ENCODE measurements at regions of chr15 and their contacts with region 1.

Region 1: DNA sequence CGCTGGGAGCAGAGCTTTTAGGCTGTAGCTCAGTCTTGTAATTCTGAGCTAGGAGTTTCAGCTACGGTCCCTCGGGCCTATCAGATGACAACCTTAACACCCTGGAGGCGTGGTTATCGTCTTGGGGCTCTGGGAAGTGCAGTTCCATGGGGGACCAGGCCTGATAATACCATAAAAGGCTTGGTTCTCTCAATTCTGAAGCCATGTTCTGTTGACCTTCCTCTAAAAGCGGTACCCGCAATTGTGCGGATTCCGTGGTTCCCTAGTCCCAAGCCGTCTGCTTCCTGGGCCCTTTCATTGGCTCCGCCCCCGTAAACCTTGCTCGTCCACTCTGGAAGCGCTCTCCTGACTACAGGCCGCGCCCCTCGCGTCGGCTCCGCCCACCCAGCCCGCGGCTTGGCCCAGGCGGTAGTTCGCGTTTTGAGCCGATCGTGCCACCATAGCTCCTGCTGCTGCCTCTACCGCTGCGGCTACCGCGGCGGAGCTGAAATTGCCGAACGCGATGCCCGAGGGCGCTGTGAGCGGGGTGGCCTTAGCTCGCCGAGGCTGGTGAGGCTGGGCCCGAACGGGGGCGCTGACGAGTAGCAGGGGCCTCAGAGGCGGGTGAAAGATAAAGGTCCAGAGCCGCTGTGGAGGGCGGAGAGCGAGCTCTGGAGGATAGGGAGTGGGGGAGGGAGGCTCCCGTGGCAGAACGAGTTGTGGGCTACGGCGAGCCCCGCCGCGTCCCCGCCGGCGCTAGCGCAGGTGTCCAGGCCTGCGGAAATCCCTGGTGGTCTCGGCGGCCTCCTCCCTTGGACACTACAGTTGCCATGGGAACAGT is at the start of gene MAPKBP1:
- DNase-seq: peak; percentile 99
- ATAC-seq: peak; percentile 93
- H3K4me3 Mint-ChIP-seq: peak within 1 kb of the TSS; percentile 86
- H3K27ac Mint-ChIP-seq: peak within 1 kb of the TSS; percentile 100
- H3K4me1 Mint-ChIP-seq: peaks cover 38% of the 10 kb centered on the region
- H3K27me3 Mint-ChIP-seq: no peaks in the 10 kb centered on the region
- CTCF ChIP-seq: 0 out of 2 replicates have a peak, but pooled peaks have one; percentile 37
- total RNA-seq, gene MAPKBP1: 11.0 to 14.5 TPM (median 12.9 TPM) in 3 replicates

Region 2: GRCh38 chr15:41585127-41586047 is 188.9 kb before region 1 on chr15:
- CTCF ChIA-PET with region 1: interaction called, 17 read pairs
- POLR2A ChIA-PET with region 1: no interaction called
- DNase-seq: peak; percentile 35
- ATAC-seq: peak; percentile 67
- H3K4me3 Mint-ChIP-seq: peak overlapping the region; percentile 68
- H3K27ac Mint-ChIP-seq: no peak overlapping the region
- H3K4me1 Mint-ChIP-seq: peaks cover 16% of the 10 kb centered on the region
- H3K27me3 Mint-ChIP-seq: peaks cover 16% of the 10 kb centered on the region
- CTCF ChIP-seq: no peak

Region 3: DNA sequence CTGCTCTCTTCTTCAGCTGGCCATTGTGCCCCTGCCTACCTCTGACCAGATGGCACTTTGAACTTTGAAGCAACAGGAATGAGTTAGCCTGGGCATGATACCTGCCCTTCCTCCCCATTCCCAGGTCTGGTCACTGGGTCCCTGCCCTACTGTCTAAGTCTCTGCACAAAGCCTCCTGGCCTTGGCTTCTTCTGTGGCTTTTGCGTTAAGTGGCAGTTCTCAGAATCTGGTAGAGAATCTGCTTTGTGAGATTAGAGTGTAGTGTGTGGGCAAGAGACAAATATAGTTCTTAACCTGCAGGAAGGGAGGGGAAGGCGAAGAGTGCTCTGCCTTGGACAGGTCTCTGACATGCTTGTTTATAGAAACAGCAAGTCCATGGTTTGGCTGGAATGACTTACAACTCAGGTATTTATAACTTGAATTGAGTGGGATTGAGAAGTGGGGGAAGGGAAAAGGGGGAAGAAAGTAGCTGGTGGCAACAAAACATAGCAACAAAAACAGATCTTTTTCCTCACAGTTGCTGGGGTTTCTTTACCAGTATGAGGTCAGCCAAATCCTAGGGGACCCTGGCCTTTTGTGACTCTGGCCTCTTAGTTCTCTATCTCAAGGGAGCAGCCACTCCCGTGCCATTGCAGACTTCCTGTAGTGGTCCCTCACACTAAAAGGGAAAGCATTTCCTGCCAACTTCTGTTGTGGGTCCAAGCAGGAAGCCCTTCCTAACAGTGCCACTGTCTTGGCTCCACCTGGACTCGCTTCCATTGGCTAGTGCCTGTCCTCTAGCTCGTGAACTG is 16.7 kb after region 1 on chr15:
- CTCF ChIA-PET with region 1: interaction called, 45 read pairs
- POLR2A ChIA-PET with region 1: no interaction called
- DNase-seq: no peak
- ATAC-seq: peak; percentile 46
- H3K4me3 Mint-ChIP-seq: no peak overlapping the region
- H3K27ac Mint-ChIP-seq: peak overlapping the region; percentile 27; the same call in 1 of the 2 replicates
- H3K4me1 Mint-ChIP-seq: peaks cover 37% of the 10 kb centered on the region
- H3K27me3 Mint-ChIP-seq: no peaks in the 10 kb centered on the region
- CTCF ChIP-seq: no peak

Region 4: DNA sequence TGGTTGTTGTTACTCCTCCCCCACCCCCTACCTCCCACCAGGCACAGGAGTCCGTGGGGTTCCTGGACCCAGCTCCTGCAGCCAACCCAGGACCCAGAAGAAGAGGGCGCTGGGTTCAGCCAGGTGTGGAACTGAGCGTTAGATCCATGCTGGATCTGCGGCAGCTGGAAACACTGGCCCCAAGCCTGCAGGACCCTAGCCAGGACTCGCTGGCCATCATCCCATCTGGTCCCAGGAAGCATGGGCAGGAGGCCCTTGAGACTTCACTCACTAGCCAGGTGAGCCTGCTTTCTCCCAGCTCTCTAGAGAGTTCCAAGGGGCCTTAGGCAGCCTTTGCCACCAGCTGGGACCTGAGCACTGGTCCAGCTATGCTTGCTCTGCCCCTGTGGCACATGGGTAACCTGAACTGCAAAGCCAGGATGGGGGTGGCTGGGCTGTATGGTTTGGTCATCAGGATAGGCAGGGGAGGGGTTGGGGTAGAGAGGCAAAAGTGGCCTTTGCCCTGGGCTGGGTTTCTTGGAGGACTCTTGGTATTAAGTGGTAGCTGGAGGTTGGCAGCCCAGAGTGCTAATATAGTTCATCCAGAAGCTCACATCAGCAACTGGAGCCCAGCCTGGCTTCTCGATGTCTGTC is 46.6 kb after region 1 on chr15:
- CTCF ChIA-PET with region 1: interaction called, 56 read pairs
- POLR2A ChIA-PET with region 1: interaction called, 15 read pairs
- DNase-seq: no peak
- ATAC-seq: no peak
- H3K4me3 Mint-ChIP-seq: no peak overlapping the region
- H3K27ac Mint-ChIP-seq: no peak overlapping the region
- H3K4me1 Mint-ChIP-seq: no peaks in the 10 kb centered on the region
- H3K27me3 Mint-ChIP-seq: no peaks in the 10 kb centered on the region
- CTCF ChIP-seq: no peak

Region 5: GRCh38 chr15:41860049-41860828 is 86.0 kb after region 1 on chr15:
- CTCF ChIA-PET with region 1: interaction called, 27 read pairs
- POLR2A ChIA-PET with region 1: no interaction called
- DNase-seq: no peak
- ATAC-seq: 0 out of 2 replicates have a peak, but pooled peaks have one; percentile 10
- H3K4me3 Mint-ChIP-seq: no peak overlapping the region
- H3K27ac Mint-ChIP-seq: no peak overlapping the region
- H3K4me1 Mint-ChIP-seq: peaks cover 9% of the 10 kb centered on the region
- H3K27me3 Mint-ChIP-seq: no peaks in the 10 kb centered on the region
- CTCF ChIP-seq: no peak

Region 6: DNA sequence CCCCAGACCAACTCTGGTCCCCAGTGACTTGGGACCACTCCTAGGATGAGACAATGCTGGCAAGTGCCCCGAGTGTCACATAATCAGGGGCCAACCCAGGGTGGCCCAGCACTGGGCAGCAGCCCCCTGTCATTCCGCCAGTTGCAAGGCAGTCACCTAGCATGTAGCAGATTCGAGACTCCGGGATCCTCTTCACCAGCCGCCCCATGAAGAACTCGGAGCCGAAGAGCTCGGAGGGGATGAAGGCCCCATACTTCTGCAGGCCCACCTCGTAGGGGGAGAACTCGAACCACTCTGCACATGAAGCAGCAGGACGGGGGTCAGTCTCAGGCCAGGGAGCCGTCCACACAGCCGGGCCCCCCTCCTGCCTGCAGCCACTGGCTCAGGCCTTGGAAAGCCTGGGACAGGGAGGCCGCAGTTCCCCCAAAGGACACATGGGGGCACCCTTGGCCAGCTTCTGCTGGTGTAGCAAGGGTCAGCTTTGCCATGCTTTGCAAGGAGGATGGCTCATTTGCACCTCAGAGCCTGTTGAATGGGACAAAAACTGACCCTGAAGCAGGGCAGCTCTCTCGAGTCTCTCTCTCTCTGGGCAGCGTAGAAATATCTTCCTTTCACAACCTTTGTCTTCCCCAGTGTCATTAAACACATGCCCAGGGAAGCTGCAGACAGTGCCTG is 215.1 kb after region 1 on chr15:
- CTCF ChIA-PET with region 1: no interaction called
- POLR2A ChIA-PET with region 1: no interaction called
- DNase-seq: peak; percentile 98
- ATAC-seq: peak; percentile 95
- H3K4me3 Mint-ChIP-seq: no peak overlapping the region
- H3K27ac Mint-ChIP-seq: no peak overlapping the region
- H3K4me1 Mint-ChIP-seq: peaks cover 6% of the 10 kb centered on the region
- H3K27me3 Mint-ChIP-seq: no peaks in the 10 kb centered on the region
- CTCF ChIP-seq: peak; percentile 97

Region 7: GRCh38 chr15:42084460-42085235 is 310.4 kb after region 1 on chr15:
- CTCF ChIA-PET with region 1: interaction called, 12 read pairs
- POLR2A ChIA-PET with region 1: no interaction called
- DNase-seq: peak; percentile 85
- ATAC-seq: peak; percentile 85
- H3K4me3 Mint-ChIP-seq: no peak overlapping the region
- H3K27ac Mint-ChIP-seq: no peak overlapping the region
- H3K4me1 Mint-ChIP-seq: peaks cover 26% of the 10 kb centered on the region
- H3K27me3 Mint-ChIP-seq: no peaks in the 10 kb centered on the region; the same call in 1 of the 2 replicates
- CTCF ChIP-seq: peak; percentile 94

Region 8: DNA sequence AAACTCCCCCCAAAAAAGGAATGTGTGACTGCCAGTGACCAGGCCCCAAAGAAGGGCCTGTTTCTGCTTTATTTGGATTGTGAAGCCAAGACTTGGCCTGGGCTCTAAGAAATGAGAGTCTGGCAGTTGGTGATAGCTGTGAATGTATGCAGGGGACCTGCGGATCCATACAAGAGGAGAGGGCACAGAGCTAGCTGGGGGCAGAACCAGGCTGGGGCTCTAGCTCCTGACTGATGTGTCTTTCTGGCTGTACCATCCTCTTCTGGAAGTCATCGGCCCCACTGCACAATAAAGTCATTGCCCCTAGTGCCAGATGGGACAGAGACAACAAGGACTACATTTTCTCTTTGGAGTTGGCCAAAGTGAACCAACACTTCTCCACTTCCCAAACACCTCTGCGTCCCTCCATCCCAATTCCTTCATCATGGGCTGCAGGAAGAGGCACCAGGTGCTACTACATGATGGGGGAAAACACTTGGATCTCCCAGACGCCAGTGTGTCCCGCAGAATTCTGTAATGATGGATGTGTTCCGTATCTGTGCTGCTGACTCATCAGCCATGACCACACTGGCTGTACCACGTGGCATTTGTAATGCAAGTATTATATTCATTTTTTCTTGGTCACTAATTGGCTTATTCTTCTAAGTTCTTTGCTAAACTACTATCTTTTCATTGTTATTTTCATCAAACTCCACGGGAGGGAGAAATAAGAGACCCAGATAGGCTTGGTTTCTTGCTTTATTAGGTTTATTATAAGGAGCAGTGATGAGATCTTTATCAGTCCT is 383.9 kb after region 1 on chr15:
- CTCF ChIA-PET with region 1: no interaction called
- POLR2A ChIA-PET with region 1: no interaction called
- DNase-seq: no peak
- ATAC-seq: no peak
- H3K4me3 Mint-ChIP-seq: no peak overlapping the region
- H3K27ac Mint-ChIP-seq: 0 out of 2 replicates have a peak overlapping the region, but pooled peaks have one; percentile 65
- H3K4me1 Mint-ChIP-seq: peaks cover 7% of the 10 kb centered on the region
- H3K27me3 Mint-ChIP-seq: no peaks in the 10 kb centered on the region
- CTCF ChIP-seq: no peak